PC-3 (cell line): ENCODE measurements at regions of chr1 and their contacts with region 1.

Region 1: DNA sequence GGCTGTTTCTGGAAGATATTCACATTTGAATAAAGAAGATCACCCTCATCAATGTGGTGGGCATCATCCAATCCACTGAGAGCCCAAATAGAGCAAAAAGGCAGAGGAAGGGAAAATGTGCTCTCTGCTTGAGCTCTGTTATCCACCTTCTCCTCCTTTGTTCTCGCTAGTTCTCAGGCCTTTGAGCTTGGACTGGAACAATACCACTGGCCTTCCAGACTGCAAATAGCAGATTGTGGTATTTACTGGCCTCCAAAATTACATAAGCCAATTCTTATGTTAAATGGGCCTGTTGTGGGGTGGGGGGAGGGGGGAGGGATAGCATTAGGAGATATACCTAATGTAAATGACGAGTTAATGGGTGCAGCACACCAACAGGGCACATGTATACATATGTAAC is 219.3 kb downstream of the C1orf94 start:
- DNase-seq: no peak
- ATAC-seq: no peak
- H3K4me3 ChIP-seq: no peak overlapping the region
- H3K27ac ChIP-seq: no peak overlapping the region
- H3K4me1 ChIP-seq: no peaks in the 10 kb centered on the region
- H3K27me3 ChIP-seq: 0 out of 2 replicates have a peak, but pooled peaks cover 2% of the 10 kb centered on the region
- CTCF ChIP-seq: no peak

Region 2: GRCh38 chr1:34590211-34590623 is 194.2 kb after region 1 on chr1:
- CTCF ChIA-PET with region 1: interaction called, 13 read pairs
- POLR2A ChIA-PET with region 1: no interaction called
- intact Hi-C with region 1: no loop called
- DNase-seq: peak; percentile 85
- ATAC-seq: peak; percentile 76
- H3K4me3 ChIP-seq: no peak overlapping the region
- H3K27ac ChIP-seq: no peak overlapping the region
- H3K4me1 ChIP-seq: peaks cover 5% of the 10 kb centered on the region; the same call in 1 of the 2 replicates
- H3K27me3 ChIP-seq: 0 out of 2 replicates have a peak, but pooled peaks cover 11% of the 10 kb centered on the region
- CTCF ChIP-seq: no peak

Region 3: GRCh38 chr1:34612091-34612827 is 216.2 kb after region 1 on chr1:
- CTCF ChIA-PET with region 1: no interaction called
- POLR2A ChIA-PET with region 1: no interaction called
- intact Hi-C with region 1: no loop called
- DNase-seq: no peak
- ATAC-seq: no peak
- H3K4me3 ChIP-seq: no peak overlapping the region
- H3K27ac ChIP-seq: no peak overlapping the region
- H3K4me1 ChIP-seq: no peaks in the 10 kb centered on the region
- H3K27me3 ChIP-seq: peaks cover 79% of the 10 kb centered on the region
- CTCF ChIP-seq: no peak